ENCODE measurements at regions of chr9 and their contacts with region 1.

Region 1: GRCh38 chr9:125758986-125759763 is 12.0 kb downstream of the PBX3 start:
- DNase-seq: peak in 1 of 3 donors; percentile 39
- ATAC-seq: peak; percentile 68 to 81
- H3K4me3 ChIP-seq: peak overlapping the region; percentile 38
- H3K27ac ChIP-seq: peak overlapping the region; percentile 42
- H3K4me1 ChIP-seq: peaks cover 5% of the 10 kb centered on the region
- H3K27me3 ChIP-seq: no peaks in the 10 kb centered on the region

Region 2: DNA sequence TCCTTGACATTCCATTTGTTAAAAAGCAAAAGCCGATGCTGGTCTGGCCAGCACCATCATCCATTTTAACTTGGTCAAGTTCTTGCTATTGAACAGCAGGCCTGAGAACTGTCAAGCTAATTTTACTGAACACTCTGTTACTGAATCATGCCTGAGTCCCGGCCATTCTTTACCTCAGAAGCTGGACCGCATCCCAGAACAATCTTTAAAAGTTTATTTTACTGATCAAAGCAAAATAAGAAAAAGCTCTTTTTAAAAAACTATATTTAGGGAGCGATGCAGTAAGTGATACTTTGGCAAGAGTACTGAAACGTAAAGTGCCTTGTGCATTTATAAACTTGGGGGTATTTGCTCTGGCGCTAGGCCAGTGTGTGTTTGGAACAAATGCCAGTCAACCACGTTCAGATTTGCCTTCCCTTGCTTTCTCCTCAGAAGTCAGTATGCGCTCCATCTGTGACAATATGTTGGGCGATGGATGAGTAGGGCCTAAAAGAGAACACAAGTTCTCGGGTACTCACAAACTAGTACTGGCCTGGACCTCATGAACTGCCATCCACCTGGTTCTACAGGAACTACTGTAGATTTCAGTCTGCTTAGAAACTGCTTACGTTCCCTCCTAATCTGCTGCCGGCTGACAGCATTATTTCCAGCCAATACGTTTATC is 214.1 kb before region 1 on chr9:
- intact Hi-C with region 1: loop called in 1 of 4 experiments (anchors 10 kb)
- DNase-seq: peak in 2 of 3 donors; percentile 37 to 61
- ATAC-seq: peak; percentile 62 to 74
- H3K4me3 ChIP-seq: no peak overlapping the region
- H3K27ac ChIP-seq: peak overlapping the region; percentile 47
- H3K4me1 ChIP-seq: peaks cover 11% of the 10 kb centered on the region
- H3K27me3 ChIP-seq: no peaks in the 10 kb centered on the region

Region 3: GRCh38 chr9:125820100-125820804 is 61.1 kb after region 1 on chr9:
- intact Hi-C with region 1: loop called in 2 of 4 experiments (anchors 5 to 10 kb)
- DNase-seq: no peak
- ATAC-seq: peak; percentile 73 to 85
- H3K4me3 ChIP-seq: peak overlapping the region; percentile 7
- H3K27ac ChIP-seq: peak overlapping the region; percentile 15
- H3K4me1 ChIP-seq: no peaks in the 10 kb centered on the region
- H3K27me3 ChIP-seq: no peaks in the 10 kb centered on the region

Region 4: DNA sequence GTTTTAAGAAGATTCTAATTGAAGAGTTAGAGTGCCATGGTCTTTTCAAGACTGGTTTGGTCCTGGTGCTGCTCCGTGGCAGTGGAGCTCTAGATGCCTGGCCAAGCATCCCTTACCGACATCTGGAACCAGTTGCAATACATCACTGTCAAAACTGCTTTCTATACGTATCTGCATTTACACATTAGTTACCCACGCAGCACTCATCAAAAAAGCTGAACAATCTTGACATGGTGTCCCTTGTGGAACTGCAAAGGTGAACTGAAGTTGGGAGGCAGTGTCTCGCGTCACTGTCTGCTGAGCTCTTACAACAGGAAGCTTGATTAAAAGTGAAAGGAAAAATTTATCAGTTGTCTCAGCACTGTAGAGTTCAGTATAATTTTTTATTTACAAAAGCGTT is 70.6 kb after region 1 on chr9:
- intact Hi-C with region 1: loop called in 2 of 4 experiments (anchors 5 to 10 kb)
- DNase-seq: peak in 2 of 3 donors; percentile 42 to 61
- ATAC-seq: peak; percentile 65 to 69
- H3K4me3 ChIP-seq: peak overlapping the region; percentile 91
- H3K27ac ChIP-seq: peak overlapping the region; percentile 15
- H3K4me1 ChIP-seq: peaks cover 1% of the 10 kb centered on the region
- H3K27me3 ChIP-seq: no peaks in the 10 kb centered on the region

Region 5: GRCh38 chr9:125889476-125890419 is 130.6 kb after region 1 on chr9:
- intact Hi-C with region 1: loop called in 1 of 4 experiments (anchors 10 kb)
- DNase-seq: peak; percentile 28 to 77 (median 73)
- ATAC-seq: peak; percentile 71 to 85
- H3K4me3 ChIP-seq: peak overlapping the region; percentile 66
- H3K27ac ChIP-seq: peak overlapping the region; percentile 63
- H3K4me1 ChIP-seq: no peaks in the 10 kb centered on the region
- H3K27me3 ChIP-seq: no peaks in the 10 kb centered on the region

Measured in right cardiac atrium (tissue), 5 donors.